ENCODE measurements at regions of chr5 and their contacts with region 1.

Region 1: GRCh38 chr5:78377056-78377717 is 16.8 kb downstream of the SCAMP1 start:
- DNase-seq: no peak
- H3K4me3 ChIP-seq: no peak overlapping the region
- CTCF ChIP-seq: no peak

Region 2: DNA sequence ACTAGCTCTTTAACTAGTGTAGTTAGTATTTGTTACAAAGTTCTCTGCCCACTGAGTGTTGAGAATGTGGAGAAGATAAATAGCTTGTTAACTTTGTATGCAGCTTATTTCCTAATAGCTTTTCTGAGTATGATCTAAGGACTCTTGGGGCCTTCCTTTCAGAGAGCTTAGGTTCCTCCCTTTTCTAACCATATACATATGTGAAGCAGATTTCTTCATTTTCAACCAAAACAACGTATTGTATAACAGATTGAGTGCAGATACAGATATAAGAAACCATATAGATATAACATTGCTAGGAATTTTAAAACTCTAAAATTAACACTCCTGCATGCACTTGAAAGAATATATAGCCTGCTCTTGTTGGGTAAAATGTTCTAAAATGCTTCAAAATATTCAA is 53.7 kb after region 1 on chr5:
- in situ Hi-C with region 1: loop called (anchors 5 kb)
- DNase-seq: no peak
- H3K4me3 ChIP-seq: no peak overlapping the region
- CTCF ChIP-seq: no peak